Caco-2 (cell line): ENCODE measurements at regions of chr9 and their contacts with region 1.

Region 1: GRCh38 chr9:110125207-110125751 is 82.7 kb downstream of the C9orf152 start:
- DNase-seq: peak; percentile 96 to 97
- H3K4me3 ChIP-seq: peak overlapping the region; percentile 49
- H3K4me3 Mint-ChIP-seq: peak overlapping the region; percentile 90
- H3K27ac Mint-ChIP-seq: peak overlapping the region; percentile 97
- H3K4me1 ChIP-seq: peaks cover 51% of the 10 kb centered on the region
- H3K4me1 Mint-ChIP-seq: peaks cover 33% of the 10 kb centered on the region
- H3K27me3 ChIP-seq: no peaks in the 10 kb centered on the region
- H3K27me3 Mint-ChIP-seq: no peaks in the 10 kb centered on the region
- CTCF ChIP-seq: no peak

Region 2: DNA sequence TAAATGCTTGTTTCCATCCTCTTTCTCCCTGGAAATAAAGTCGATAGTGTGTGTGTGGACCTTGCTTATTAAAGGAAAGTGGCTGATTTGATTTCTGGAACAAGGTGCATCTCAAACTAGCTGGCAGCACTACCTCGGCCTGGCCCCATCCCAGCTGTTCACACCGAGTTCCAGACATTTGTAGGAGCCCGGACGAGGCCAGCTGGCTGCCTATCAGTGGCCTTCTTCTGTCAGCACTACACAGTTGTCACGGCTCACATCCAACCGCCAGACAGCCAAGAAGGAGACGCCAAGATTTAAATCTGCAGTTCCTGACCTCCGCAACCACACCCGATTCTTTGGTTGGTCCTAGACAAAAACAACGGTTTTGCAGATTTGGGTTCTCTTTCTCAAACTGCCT is 281.6 kb before region 1 on chr9:
- CTCF ChIA-PET with region 1: no interaction called
- POLR2A ChIA-PET with region 1: no interaction called
- intact Hi-C with region 1: no loop called
- DNase-seq: no peak
- H3K4me3 ChIP-seq: no peak overlapping the region
- H3K4me3 Mint-ChIP-seq: no peak overlapping the region
- H3K27ac Mint-ChIP-seq: no peak overlapping the region
- H3K4me1 ChIP-seq: no peaks in the 10 kb centered on the region
- H3K4me1 Mint-ChIP-seq: no peaks in the 10 kb centered on the region
- H3K27me3 ChIP-seq: no peaks in the 10 kb centered on the region; the same call in 1 of the 2 replicates
- H3K27me3 Mint-ChIP-seq: peaks cover 17% of the 10 kb centered on the region
- CTCF ChIP-seq: no peak

Region 3: GRCh38 chr9:110069326-110070248 is 55.7 kb before region 1 on chr9:
- CTCF ChIA-PET with region 1: no interaction called
- POLR2A ChIA-PET with region 1: interaction called, 10 read pairs
- intact Hi-C with region 1: no loop called
- DNase-seq: no peak
- H3K4me3 ChIP-seq: no peak overlapping the region
- H3K4me3 Mint-ChIP-seq: no peak overlapping the region
- H3K27ac Mint-ChIP-seq: no peak overlapping the region
- H3K4me1 ChIP-seq: peaks cover 29% of the 10 kb centered on the region
- H3K4me1 Mint-ChIP-seq: peaks cover 30% of the 10 kb centered on the region
- H3K27me3 ChIP-seq: no peaks in the 10 kb centered on the region
- H3K27me3 Mint-ChIP-seq: no peaks in the 10 kb centered on the region
- CTCF ChIP-seq: no peak

Region 4: GRCh38 chr9:110088099-110088498 is 37.2 kb before region 1 on chr9:
- CTCF ChIA-PET with region 1: interaction called, 3 read pairs
- POLR2A ChIA-PET with region 1: interaction called, 16 read pairs
- intact Hi-C with region 1: loop called (anchors 1 kb)
- DNase-seq: peak; percentile 13 to 62
- H3K4me3 ChIP-seq: no peak overlapping the region
- H3K4me3 Mint-ChIP-seq: no peak overlapping the region
- H3K27ac Mint-ChIP-seq: peak overlapping the region; percentile 14
- H3K4me1 ChIP-seq: peaks cover 43% of the 10 kb centered on the region
- H3K4me1 Mint-ChIP-seq: peaks cover 38% of the 10 kb centered on the region
- H3K27me3 ChIP-seq: no peaks in the 10 kb centered on the region
- H3K27me3 Mint-ChIP-seq: no peaks in the 10 kb centered on the region
- CTCF ChIP-seq: no peak

Region 5: DNA sequence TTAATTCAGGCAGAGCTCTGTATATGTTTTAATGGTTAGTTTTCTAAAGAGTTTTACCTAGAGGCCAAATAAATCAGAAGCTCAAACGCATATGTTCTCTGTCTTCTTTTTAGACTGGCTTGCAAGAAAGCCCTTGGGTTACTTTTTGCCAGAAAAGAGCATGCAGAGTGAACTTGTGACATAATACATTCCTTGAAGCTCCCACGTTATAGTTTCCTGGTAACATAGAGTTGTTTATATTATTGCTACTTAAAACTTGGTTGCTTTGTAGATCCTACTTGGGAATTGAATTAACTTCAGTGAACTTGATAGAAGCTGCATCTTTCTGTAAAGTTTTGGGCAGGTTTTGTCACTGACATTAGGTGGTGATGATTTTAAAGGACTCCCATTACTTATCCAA is 20.2 kb before region 1 on chr9:
- CTCF ChIA-PET with region 1: interaction called, 4 read pairs
- POLR2A ChIA-PET with region 1: interaction called, 81 read pairs
- intact Hi-C with region 1: loop called (anchors 1 kb)
- DNase-seq: no peak
- H3K4me3 ChIP-seq: no peak overlapping the region
- H3K4me3 Mint-ChIP-seq: no peak overlapping the region
- H3K27ac Mint-ChIP-seq: peak overlapping the region; percentile 89
- H3K4me1 ChIP-seq: peaks cover 75% of the 10 kb centered on the region
- H3K4me1 Mint-ChIP-seq: peaks cover 41% of the 10 kb centered on the region
- H3K27me3 ChIP-seq: no peaks in the 10 kb centered on the region
- H3K27me3 Mint-ChIP-seq: no peaks in the 10 kb centered on the region
- CTCF ChIP-seq: no peak

Region 6: GRCh38 chr9:110452227-110452801 is 327.0 kb after region 1 on chr9:
- CTCF ChIA-PET with region 1: no interaction called
- POLR2A ChIA-PET with region 1: no interaction called
- intact Hi-C with region 1: no loop called
- DNase-seq: no peak
- H3K4me3 ChIP-seq: no peak overlapping the region
- H3K4me3 Mint-ChIP-seq: no peak overlapping the region
- H3K27ac Mint-ChIP-seq: no peak overlapping the region
- H3K4me1 ChIP-seq: no peaks in the 10 kb centered on the region
- H3K4me1 Mint-ChIP-seq: no peaks in the 10 kb centered on the region
- H3K27me3 ChIP-seq: no peaks in the 10 kb centered on the region
- H3K27me3 Mint-ChIP-seq: peaks cover 5% of the 10 kb centered on the region
- CTCF ChIP-seq: peak; percentile 30 to 40